AG04449 (cell line): ENCODE measurements at regions of chr19 and their contacts with region 1.

Region 1: DNA sequence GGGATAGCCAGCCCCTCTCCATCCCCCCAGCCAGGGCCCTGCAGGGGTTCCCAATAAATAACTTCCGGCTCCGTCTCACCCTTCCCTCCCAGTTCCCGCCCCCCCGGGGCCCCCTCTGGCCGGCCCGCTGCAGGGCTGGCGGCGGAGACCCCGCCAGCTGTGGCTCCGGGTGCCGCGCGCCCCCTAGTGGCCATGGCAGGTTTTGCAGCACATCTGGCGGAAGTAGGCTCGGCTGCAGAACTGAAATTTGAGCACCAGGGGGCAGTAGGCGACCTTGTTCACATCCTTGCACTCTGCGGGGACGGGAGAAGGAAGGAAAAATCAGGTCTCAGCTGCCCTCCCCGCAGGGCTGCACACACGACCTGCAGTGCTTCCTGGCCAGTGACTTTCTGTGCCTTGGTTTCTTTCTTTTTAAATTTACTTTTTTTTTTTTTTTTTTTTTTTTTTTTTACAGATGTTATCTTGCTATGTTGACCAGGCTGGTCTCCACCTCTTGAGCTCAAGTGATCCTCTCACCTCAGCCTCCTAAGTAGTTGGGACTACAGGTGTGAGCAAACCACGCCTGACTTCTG is 3.6 kb upstream of the MYO1F start:
- DNase-seq: no peak
- H3K4me3 ChIP-seq: no peak overlapping the region
- CTCF ChIP-seq: peak; percentile 99

Region 2: DNA sequence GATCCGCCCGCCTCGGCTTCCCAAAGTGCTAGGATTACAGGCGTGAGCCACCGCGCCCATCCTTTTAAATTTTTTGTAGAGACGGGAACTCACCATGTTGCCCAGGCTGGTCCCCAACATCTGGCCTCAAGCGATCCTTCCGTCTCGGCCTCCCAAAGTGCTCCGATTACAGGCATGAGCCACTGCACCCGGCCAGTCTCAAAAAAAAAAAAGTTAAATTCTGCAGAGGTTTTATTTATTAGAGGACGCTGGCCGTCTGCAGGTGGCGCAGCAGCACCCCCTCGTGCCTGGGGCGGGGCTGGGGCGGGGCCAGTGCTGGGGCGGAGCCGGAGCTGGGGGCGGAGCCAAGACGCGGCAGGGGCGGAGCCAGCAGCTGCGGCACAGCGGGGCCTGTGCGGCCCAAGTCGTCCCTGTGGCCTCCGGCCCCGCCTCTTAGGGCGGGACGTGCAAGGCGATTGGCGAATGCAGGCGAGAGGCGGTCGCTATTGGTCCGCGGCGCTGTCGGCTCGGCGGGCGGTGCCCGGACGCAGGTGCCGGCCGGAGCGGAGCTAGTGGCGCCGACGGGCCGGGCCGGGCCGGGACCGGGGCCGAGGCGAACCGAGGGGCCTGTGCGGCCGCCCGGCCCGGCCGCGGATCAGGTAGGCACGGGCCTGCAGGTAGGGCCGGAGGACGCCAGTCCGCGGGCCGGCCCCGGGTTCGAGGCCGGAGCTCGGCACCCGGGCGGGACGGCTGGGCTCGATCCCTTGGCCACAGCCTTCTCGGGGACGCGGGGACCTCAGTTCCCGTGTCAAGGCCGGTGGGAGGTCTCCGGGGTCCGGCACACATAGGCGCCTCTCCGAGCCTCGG is 167.8 kb before region 1 on chr19 and contains the start of gene MARCHF2:
- CTCF ChIA-PET with region 1: interaction called, 35 read pairs
- POLR2A ChIA-PET with region 1: no interaction called
- DNase-seq: peak; percentile 74
- H3K4me3 ChIP-seq: peak within 1 kb of the TSS; percentile 67
- CTCF ChIP-seq: peak; percentile 57

Region 3: GRCh38 chr19:8569066-8569771 is 11.6 kb before region 1 on chr19:
- CTCF ChIA-PET with region 1: interaction called, 144 read pairs
- POLR2A ChIA-PET with region 1: interaction called, 6 read pairs
- DNase-seq: peak; percentile 85
- H3K4me3 ChIP-seq: no peak overlapping the region
- CTCF ChIP-seq: no peak

Region 4: DNA sequence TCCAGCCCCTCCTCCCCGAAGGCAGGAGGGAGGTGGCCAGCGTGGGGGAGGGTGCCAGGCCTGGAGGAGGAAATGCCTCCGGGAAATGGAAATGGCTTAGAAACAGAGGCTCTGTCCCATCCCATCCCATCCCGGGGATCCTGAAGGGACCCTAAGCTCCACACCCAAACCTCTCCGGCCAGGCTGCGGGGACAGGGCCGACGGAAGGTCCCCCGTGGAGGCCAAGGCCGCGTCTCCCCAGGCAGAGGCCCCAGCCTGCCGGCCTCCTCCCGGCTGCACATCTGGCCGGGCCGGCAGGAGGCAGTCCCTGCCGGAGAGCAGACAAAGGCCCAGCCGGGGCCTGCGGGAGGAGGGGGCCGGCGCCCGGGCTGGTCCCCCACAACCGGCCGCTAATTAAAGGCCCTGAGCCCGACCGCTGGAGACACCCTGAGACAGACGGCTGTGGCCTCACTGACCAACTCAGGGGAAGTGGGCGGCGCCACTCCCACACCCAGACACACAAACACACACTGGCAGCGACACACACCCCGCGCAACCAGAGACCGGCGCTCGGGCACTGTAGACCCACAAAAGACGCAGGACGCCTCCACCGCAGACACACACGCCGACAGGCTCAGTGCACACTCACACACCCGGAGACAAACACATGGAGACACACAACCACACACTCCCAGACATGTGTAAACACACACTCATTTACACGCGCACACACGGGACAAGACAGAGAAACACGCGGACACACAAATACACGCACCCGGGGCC is 28.7 kb after region 1 on chr19:
- CTCF ChIA-PET with region 1: interaction called, 21 read pairs
- POLR2A ChIA-PET with region 1: no interaction called
- DNase-seq: no peak
- H3K4me3 ChIP-seq: peak overlapping the region; percentile 89
- CTCF ChIP-seq: peak; percentile 45

Region 5: DNA sequence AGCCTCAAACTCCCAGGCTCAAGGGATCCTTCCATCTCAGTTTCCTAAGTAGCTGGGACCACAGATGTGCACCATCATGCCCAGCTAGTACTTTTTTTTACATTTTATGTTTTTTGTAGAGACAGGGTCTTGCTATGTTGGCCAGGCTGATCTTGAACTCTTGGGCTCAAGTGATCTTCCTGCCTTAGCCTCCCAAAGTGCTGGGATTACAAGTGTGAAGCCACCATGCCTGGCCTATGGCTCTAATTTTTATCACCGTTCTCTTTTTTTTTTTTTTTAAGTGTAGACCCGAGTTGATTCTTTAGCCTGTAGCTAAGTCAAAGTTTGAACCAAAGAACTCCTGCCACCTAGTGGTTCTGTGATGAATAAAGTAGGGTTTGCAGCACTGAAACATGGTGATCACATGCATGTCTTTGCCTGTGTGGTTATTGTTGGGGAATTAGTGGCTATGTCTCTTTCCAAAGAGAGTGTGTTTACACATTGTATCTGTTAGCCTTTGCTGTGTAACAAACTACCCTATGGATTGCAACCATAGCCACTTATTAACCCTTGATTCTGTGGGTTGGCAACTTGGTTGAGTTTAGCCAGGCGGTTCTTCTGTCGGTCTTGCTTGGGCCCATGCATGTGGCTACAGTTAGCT is 61.2 kb after region 1 on chr19:
- CTCF ChIA-PET with region 1: interaction called, 123 read pairs
- POLR2A ChIA-PET with region 1: no interaction called
- DNase-seq: no peak
- H3K4me3 ChIP-seq: no peak overlapping the region
- CTCF ChIP-seq: peak; percentile 51

Region 6: GRCh38 chr19:8738377-8738776 is 157.6 kb after region 1 on chr19:
- CTCF ChIA-PET with region 1: no interaction called
- POLR2A ChIA-PET with region 1: no interaction called
- DNase-seq: no peak
- H3K4me3 ChIP-seq: no peak overlapping the region
- CTCF ChIP-seq: no peak